ENCODE measurements at regions of chr16 and their contacts with region 1.

Region 1: DNA sequence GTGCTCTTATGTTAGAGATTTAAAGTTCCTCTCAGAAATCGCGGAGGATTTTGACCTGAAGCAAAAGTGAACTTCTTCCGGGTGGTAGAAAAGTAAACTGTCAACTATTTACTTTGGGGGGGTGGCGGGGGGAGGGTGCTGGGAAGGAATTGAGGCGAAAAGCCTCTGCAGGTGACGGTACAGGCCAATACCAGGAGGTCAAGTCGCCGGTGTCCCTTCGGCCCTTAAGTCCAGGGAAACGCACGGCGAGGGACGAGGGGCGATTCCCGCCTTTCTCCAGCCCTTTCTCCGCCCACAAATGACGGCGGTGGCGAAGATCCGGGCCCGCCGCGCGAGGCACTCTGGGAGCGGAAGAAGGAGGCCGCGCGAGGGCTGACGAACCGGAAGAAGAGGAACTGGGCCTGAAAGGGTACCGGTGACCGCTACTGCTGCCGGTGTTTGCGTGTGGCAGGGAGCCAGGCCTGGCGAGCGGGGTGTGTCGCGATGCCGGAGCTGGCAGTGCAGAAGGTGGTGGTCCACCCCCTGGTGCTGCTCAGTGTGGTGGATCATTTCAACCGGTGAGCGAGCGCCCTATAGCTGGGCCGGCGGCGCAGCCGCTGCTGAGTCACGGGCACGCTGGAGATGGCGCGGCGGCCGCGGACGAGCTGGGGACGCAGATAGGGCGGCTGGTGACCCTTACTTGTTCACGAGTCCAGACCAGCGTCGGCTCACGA is at the start of gene PSMD7:
- DNase-seq: peak; percentile 77 to 94 (median 84)
- ATAC-seq: peak; percentile 90
- H3K4me3 ChIP-seq: peak within 1 kb of the TSS; percentile 86
- H3K4me3 Mint-ChIP-seq: peak within 1 kb of the TSS; percentile 98
- H3K27ac ChIP-seq: peak within 1 kb of the TSS; percentile 96 to 98
- H3K27ac Mint-ChIP-seq: peak within 1 kb of the TSS; percentile 96
- H3K4me1 ChIP-seq: peaks cover 21% of the 10 kb centered on the region
- H3K4me1 Mint-ChIP-seq: peaks cover 42% of the 10 kb centered on the region
- H3K27me3 ChIP-seq: no peaks in the 10 kb centered on the region
- H3K27me3 Mint-ChIP-seq: no peaks in the 10 kb centered on the region
- CTCF ChIP-seq: no peak
- total RNA-seq, gene PSMD7: 123 to 127 TPM

Region 2: GRCh38 chr16:74372953-74373846 is 76.6 kb after region 1 on chr16:
- CTCF ChIA-PET with region 1: no interaction called
- POLR2A ChIA-PET with region 1: interaction called, 11 read pairs
- intact Hi-C with region 1: loop called in 1 of 2 experiments (anchors 2 kb)
- DNase-seq: no peak
- ATAC-seq: no peak
- H3K4me3 ChIP-seq: no peak overlapping the region
- H3K4me3 Mint-ChIP-seq: no peak overlapping the region
- H3K27ac ChIP-seq: no peak overlapping the region
- H3K27ac Mint-ChIP-seq: peak overlapping the region; percentile 69
- H3K4me1 ChIP-seq: peaks cover 7% of the 10 kb centered on the region
- H3K4me1 Mint-ChIP-seq: peaks cover 8% of the 10 kb centered on the region
- H3K27me3 ChIP-seq: no peaks in the 10 kb centered on the region
- H3K27me3 Mint-ChIP-seq: no peaks in the 10 kb centered on the region
- CTCF ChIP-seq: no peak

Region 3: GRCh38 chr16:74580833-74581232 is 284.2 kb after region 1 on chr16:
- CTCF ChIA-PET with region 1: no interaction called
- POLR2A ChIA-PET with region 1: no interaction called
- intact Hi-C with region 1: no loop called
- DNase-seq: no peak
- ATAC-seq: no peak
- H3K4me3 ChIP-seq: no peak overlapping the region
- H3K4me3 Mint-ChIP-seq: peak overlapping the region; percentile 32
- H3K27ac ChIP-seq: no peak overlapping the region
- H3K27ac Mint-ChIP-seq: peak overlapping the region; percentile 40
- H3K4me1 ChIP-seq: peaks cover 48% of the 10 kb centered on the region
- H3K4me1 Mint-ChIP-seq: peaks cover 87% of the 10 kb centered on the region
- H3K27me3 ChIP-seq: no peaks in the 10 kb centered on the region
- H3K27me3 Mint-ChIP-seq: no peaks in the 10 kb centered on the region
- CTCF ChIP-seq: no peak

Region 4: DNA sequence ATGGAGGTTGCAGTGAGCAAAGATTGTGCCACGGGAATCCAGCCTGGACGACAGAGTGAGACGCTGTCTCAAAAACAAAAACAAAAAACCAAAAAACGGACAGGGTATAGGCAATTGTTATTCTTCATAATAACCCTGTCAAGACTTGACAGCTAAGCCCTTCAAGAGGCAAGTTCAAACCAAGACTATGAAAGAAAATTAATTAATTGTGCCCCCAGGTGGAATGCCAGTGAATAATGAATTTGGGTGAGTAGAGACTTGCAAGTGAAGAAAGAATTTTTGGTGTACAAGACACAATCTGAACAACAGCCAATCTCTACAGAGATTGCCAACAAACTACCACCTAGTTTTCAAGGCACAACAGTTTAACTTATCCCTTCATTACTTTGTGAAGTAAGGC is 363.8 kb after region 1 on chr16:
- CTCF ChIA-PET with region 1: no interaction called
- POLR2A ChIA-PET with region 1: no interaction called
- intact Hi-C with region 1: loop called in 1 of 2 experiments (anchors 5 kb)
- DNase-seq: no peak
- ATAC-seq: no peak
- H3K4me3 ChIP-seq: no peak overlapping the region
- H3K4me3 Mint-ChIP-seq: no peak overlapping the region
- H3K27ac ChIP-seq: no peak overlapping the region
- H3K27ac Mint-ChIP-seq: no peak overlapping the region
- H3K4me1 ChIP-seq: peaks cover 61% of the 10 kb centered on the region
- H3K4me1 Mint-ChIP-seq: peaks cover 87% of the 10 kb centered on the region
- H3K27me3 ChIP-seq: no peaks in the 10 kb centered on the region
- H3K27me3 Mint-ChIP-seq: no peaks in the 10 kb centered on the region
- CTCF ChIP-seq: no peak

Region 5: GRCh38 chr16:74998481-74999218 is 702.1 kb after region 1 on chr16 and contains the start of gene ZNRF1:
- CTCF ChIA-PET with region 1: no interaction called
- POLR2A ChIA-PET with region 1: no interaction called
- intact Hi-C with region 1: loop called in 1 of 2 experiments (anchors 10 kb)
- DNase-seq: peak; percentile 64 to 89 (median 78)
- ATAC-seq: peak; percentile 79
- H3K4me3 ChIP-seq: peak within 1 kb of the TSS; percentile 61
- H3K4me3 Mint-ChIP-seq: peak within 1 kb of the TSS; percentile 94
- H3K27ac ChIP-seq: no peak within 1 kb of the TSS
- H3K27ac Mint-ChIP-seq: peak within 1 kb of the TSS; percentile 82
- H3K4me1 ChIP-seq: peaks cover 25% of the 10 kb centered on the region
- H3K4me1 Mint-ChIP-seq: peaks cover 21% of the 10 kb centered on the region
- H3K27me3 ChIP-seq: no peaks in the 10 kb centered on the region
- H3K27me3 Mint-ChIP-seq: no peaks in the 10 kb centered on the region
- CTCF ChIP-seq: peak; percentile 77
- total RNA-seq, gene ZNRF1: 2.8 to 4.0 TPM

Region 6: GRCh38 chr16:75432828-75433731 is 1136.5 kb after region 1 on chr16 and contains the start of gene CFDP1:
- CTCF ChIA-PET with region 1: no interaction called
- POLR2A ChIA-PET with region 1: no interaction called
- intact Hi-C with region 1: loop called in 1 of 2 experiments (anchors 5 kb)
- DNase-seq: peak; percentile 92 to 98 (median 94)
- ATAC-seq: peak; percentile 79
- H3K4me3 ChIP-seq: peak within 1 kb of the TSS; percentile 83
- H3K4me3 Mint-ChIP-seq: peak within 1 kb of the TSS; percentile 94
- H3K27ac ChIP-seq: peak within 1 kb of the TSS; percentile 96 to 97
- H3K27ac Mint-ChIP-seq: peak within 1 kb of the TSS; percentile 96
- H3K4me1 ChIP-seq: peaks cover 33% of the 10 kb centered on the region
- H3K4me1 Mint-ChIP-seq: peaks cover 28% of the 10 kb centered on the region
- H3K27me3 ChIP-seq: no peaks in the 10 kb centered on the region
- H3K27me3 Mint-ChIP-seq: no peaks in the 10 kb centered on the region
- CTCF ChIP-seq: no peak
- total RNA-seq, gene CFDP1: 23.0 to 25.5 TPM